ENCODE measurements at regions of chr17 and their contacts with region 1.

Region 1: DNA sequence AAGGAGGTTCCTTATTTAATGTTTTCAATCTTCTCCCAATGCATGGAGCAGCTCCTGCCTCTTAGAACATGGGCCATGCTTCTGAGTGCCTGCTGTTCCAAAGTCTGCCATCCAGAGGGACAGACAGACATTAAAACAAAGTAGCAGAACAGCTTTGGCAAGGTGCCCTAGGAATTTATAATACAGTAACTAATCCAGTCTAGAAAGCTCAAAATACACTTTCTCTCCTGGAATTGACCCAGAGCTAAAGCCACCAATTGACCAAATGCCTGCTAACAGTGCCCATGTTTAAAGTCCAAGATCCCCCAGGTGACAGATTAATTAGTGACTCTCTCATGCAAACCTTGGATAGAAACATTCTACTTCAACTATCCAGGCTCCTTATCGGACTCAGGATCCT is 11.1 kb upstream of the CHRNE start:
- DNase-seq: no peak
- H3K4me3 ChIP-seq: no peak overlapping the region
- H3K27ac ChIP-seq: no peak overlapping the region
- H3K4me1 ChIP-seq: peaks cover 0 to 3% of the 10 kb centered on the region in 2 donors
- H3K27me3 ChIP-seq: no peaks in the 10 kb centered on the region
- CTCF ChIP-seq: no peak
- POLR2A ChIP-seq: no peak

Region 2: DNA sequence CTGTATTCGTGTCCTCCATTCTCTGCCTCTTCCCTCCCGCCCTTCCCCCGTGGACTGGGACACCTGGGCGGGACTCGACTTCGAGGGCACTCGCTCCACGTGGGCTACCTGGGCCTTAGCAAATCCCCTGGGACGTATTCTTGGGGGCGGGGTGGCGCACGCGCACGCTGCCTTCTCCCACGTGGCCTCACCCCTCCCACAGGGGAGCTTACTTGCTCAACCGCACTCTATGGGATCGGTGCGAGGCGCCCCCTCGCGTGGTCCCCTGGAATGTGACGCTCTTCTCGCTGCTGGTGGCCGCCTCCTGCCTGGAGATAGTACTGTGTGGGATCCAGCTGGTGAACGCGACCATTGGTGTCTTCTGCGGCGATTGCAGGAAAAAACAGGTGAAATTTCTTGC is 131.3 kb before region 1 on chr17:
- intact Hi-C with region 1: no loop called
- DNase-seq: no peak
- H3K4me3 ChIP-seq: no peak overlapping the region
- H3K27ac ChIP-seq: no peak overlapping the region
- H3K4me1 ChIP-seq: peaks cover 0 to 25% of the 10 kb centered on the region in 2 donors
- H3K27me3 ChIP-seq: peaks cover 29% of the 10 kb centered on the region
- CTCF ChIP-seq: peak in 1 of 6 experiments; percentile 30
- POLR2A ChIP-seq: no peak

Region 3: DNA sequence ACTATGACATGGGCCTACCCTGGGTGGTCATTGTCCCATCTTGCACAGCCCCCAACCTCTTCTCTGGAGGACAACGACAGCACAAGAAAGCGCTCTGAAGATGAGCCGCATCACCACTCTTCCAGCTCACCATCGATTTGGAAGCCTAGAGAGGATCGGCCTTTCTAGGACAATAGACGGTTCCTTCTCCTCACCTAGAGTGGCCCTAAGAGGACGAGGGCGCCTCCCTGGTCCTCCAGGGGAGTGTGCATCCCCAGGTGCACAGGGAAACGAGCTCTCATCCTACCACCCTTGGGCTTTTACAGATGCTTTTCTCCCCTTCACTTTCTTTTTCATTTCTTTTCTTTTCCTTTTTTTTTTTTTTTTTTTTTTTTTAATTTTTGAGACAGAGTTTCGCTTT is 141.5 kb after region 1 on chr17:
- intact Hi-C with region 1: loop called in 1 of 2 experiments (anchors 5 kb)
- DNase-seq: no peak
- H3K4me3 ChIP-seq: no peak overlapping the region
- H3K27ac ChIP-seq: no peak overlapping the region
- H3K4me1 ChIP-seq: no peaks in the 10 kb centered on the region
- H3K27me3 ChIP-seq: no peaks in the 10 kb centered on the region
- CTCF ChIP-seq: no peak
- POLR2A ChIP-seq: no peak

Region 4: DNA sequence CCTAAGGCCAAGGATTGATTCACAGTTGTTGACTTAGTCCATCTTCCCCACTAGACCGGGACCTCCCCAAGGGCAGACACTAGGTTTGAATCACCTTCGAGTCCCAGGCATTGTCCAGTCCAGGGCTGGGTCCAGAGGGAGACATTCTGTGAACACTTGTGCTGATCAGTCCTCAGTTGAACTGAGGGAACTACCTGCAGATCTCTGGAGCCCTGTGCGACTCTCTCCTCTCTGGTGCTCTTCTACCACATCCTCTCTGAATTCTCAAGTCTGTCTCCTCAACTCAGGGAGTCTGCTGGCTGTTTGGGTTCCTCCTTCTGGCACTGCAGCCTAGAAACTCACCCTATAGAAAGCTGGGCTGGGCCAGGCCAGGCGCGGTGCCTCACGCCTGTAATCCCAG is 186.8 kb after region 1 on chr17:
- intact Hi-C with region 1: no loop called
- DNase-seq: no peak
- H3K4me3 ChIP-seq: no peak overlapping the region
- H3K27ac ChIP-seq: no peak overlapping the region
- H3K4me1 ChIP-seq: no peaks in the 10 kb centered on the region
- H3K27me3 ChIP-seq: no peaks in the 10 kb centered on the region
- CTCF ChIP-seq: no peak
- POLR2A ChIP-seq: no peak